ENCODE measurements at regions of chr3 and their contacts with region 1.

Region 1: DNA sequence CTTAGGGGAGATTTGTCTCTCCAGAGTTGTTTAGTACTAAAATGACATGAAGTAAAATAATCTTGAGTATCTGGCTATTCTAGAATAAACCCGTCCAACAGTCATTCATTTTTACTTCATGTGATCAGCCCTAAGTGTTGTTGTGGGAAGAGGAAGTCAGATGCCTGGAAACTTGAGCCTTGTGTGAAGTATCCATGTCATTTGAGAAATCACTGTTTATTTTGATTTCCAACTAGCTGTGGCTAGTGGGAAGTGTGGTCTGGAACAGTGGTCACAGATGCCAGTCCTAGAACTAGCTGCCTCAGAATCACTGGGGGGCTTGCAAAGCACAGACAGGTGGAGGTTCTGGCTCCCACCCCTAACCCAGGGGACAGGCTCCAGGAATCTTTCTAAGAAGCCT is 77.7 kb upstream of the LIMD1 start:
- DNase-seq: no peak
- ATAC-seq: no peak
- H3K4me3 ChIP-seq: no peak overlapping the region
- H3K27ac ChIP-seq: no peak overlapping the region
- H3K4me1 ChIP-seq: no peaks in the 10 kb centered on the region
- H3K27me3 ChIP-seq: no peaks in the 10 kb centered on the region
- CTCF ChIP-seq: no peak
- EP300 ChIP-seq: no peak
- POLR2A ChIP-seq: no peak
- RAD21 ChIP-seq: no peak

Region 2: GRCh38 chr3:45244356-45244755 is 272.5 kb before region 1 on chr3:
- CTCF ChIA-PET with region 1: no interaction called
- POLR2A ChIA-PET with region 1: no interaction called
- in situ Hi-C with region 1: no loop called
- intact Hi-C with region 1: no loop called
- DNase-seq: no peak
- ATAC-seq: no peak
- H3K4me3 ChIP-seq: no peak overlapping the region
- H3K27ac ChIP-seq: no peak overlapping the region
- H3K4me1 ChIP-seq: no peaks in the 10 kb centered on the region; a peak in 1 of 5 replicates
- H3K27me3 ChIP-seq: peaks cover 0 to 8% of the 10 kb centered on the region in 2 experiments; a peak in 1 of 5 replicates
- CTCF ChIP-seq: no peak
- EP300 ChIP-seq: no peak
- POLR2A ChIP-seq: no peak
- RAD21 ChIP-seq: no peak

Region 3: GRCh38 chr3:45906681-45907407 is 390.0 kb after region 1 on chr3:
- CTCF ChIA-PET with region 1: no interaction called
- POLR2A ChIA-PET with region 1: no interaction called
- in situ Hi-C with region 1: no loop called
- intact Hi-C with region 1: loop called (anchors 10 kb)
- DNase-seq: peak; percentile 40 to 60 (median 51)
- ATAC-seq: peak; percentile 90
- H3K4me3 ChIP-seq: no peak overlapping the region
- H3K27ac ChIP-seq: no peak overlapping the region
- H3K4me1 ChIP-seq: peaks cover 0 to 3% of the 10 kb centered on the region in 2 experiments; a peak in 3 of 5 replicates
- H3K27me3 ChIP-seq: peaks cover 5 to 59% of the 10 kb centered on the region in 2 experiments
- CTCF ChIP-seq: peak; percentile 80 to 90 (median 86)
- EP300 ChIP-seq: no peak
- POLR2A ChIP-seq: no peak
- RAD21 ChIP-seq: peak; percentile 55 to 77

Measured in K562 (cell line).